B cell (primary cell): ENCODE measurements at regions of chr6 and their contacts with region 1.

Region 1: DNA sequence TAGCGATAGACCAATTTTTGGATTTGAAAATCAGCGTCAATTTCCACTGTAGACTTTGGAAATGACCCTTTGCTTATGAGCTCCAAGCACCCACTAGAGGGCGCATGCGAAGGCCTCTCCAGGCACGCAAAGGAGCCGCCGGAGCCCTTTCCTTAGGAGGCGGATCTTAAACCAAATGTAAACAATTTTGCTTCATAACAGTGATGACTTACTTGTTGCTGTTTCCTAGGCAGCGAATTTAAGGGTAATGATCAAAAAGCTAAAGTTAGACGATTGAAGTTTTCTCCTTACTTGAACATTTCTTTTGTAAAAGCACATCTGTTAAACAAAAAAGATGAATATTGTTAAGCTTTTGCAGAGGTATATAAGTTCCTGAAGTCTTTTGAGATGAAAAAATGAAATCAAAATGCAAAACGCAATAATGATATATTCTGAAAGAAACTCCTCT is 29.2 kb upstream of the EXOC2 start:
- DNase-seq: peak; percentile 72
- ATAC-seq: peak; percentile 43
- H3K4me3 ChIP-seq: no peak overlapping the region
- H3K4me3 Mint-ChIP-seq: no peak overlapping the region
- H3K27ac ChIP-seq: no peak overlapping the region
- H3K27ac Mint-ChIP-seq: no peak overlapping the region
- H3K4me1 ChIP-seq: peaks cover 0 to 5% of the 10 kb centered on the region in 2 donors
- H3K4me1 Mint-ChIP-seq: peaks cover 6% of the 10 kb centered on the region
- H3K27me3 ChIP-seq: peaks cover 0 to 5% (median 2%) of the 10 kb centered on the region in 4 experiments
- H3K27me3 Mint-ChIP-seq: peaks cover 43% of the 10 kb centered on the region
- CTCF ChIP-seq: peak; percentile 95

Region 2: DNA sequence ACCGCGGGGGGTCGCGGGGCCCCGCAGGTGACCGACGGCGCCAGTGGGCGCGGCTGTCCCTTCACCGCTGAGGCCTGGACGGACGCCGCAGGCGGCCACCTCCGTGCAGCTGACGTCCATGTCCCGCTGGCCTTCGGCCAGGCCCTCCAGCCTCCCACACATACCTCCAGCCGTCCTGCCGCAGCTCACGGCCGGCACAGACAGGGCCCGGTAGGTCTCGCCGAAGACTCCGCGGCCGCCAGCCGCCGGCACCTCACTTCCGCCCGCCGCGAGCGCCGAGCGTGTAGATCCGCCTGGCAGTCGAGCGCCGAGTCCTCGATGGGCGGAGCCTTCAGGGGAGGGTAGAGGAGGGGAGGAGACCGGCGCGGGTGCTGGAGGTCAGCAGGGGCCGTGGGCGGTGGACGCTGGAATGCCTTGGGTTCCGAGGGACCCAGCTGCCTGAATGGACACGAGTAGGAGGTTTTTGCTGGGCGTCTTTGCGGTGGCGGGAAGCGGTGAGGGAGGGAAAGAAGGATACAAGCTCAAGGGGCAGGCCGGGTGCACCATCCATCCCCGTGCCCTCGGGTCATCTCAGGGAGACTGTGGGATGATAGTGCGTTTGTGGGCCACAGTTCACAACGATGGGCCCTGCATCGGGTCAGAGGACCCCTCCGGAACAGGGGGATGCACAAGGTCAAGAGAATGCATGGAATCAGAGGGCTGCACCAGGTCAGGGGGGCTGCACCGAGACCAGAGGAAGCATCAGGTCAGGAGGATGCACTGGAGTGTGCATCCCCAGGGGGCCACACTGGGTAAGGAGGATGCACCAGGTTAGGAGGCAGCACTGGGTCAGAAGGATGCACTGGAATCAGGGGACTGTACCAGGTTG is 29.0 kb before region 1 on chr6 and contains the start of gene EXOC2:
- CTCF ChIA-PET with region 1: interaction called, 12 read pairs
- POLR2A ChIA-PET with region 1: no interaction called
- intact Hi-C with region 1: no loop called
- DNase-seq: peak; percentile 87
- ATAC-seq: peak; percentile 86
- H3K4me3 ChIP-seq: peak within 1 kb of the TSS; percentile 45 to 91 (median 86)
- H3K4me3 Mint-ChIP-seq: peak within 1 kb of the TSS; percentile 99
- H3K27ac ChIP-seq: peak within 1 kb of the TSS; percentile 62 to 93
- H3K27ac Mint-ChIP-seq: peak within 1 kb of the TSS; percentile 95
- H3K4me1 ChIP-seq: peaks cover 16 to 17% of the 10 kb centered on the region in 2 donors
- H3K4me1 Mint-ChIP-seq: peaks cover 35% of the 10 kb centered on the region
- H3K27me3 ChIP-seq: no peaks in the 10 kb centered on the region
- H3K27me3 Mint-ChIP-seq: no peaks in the 10 kb centered on the region
- CTCF ChIP-seq: no peak
- total RNA-seq, gene EXOC2: 41.0 and 45.0 TPM in 2 replicates

Region 3: DNA sequence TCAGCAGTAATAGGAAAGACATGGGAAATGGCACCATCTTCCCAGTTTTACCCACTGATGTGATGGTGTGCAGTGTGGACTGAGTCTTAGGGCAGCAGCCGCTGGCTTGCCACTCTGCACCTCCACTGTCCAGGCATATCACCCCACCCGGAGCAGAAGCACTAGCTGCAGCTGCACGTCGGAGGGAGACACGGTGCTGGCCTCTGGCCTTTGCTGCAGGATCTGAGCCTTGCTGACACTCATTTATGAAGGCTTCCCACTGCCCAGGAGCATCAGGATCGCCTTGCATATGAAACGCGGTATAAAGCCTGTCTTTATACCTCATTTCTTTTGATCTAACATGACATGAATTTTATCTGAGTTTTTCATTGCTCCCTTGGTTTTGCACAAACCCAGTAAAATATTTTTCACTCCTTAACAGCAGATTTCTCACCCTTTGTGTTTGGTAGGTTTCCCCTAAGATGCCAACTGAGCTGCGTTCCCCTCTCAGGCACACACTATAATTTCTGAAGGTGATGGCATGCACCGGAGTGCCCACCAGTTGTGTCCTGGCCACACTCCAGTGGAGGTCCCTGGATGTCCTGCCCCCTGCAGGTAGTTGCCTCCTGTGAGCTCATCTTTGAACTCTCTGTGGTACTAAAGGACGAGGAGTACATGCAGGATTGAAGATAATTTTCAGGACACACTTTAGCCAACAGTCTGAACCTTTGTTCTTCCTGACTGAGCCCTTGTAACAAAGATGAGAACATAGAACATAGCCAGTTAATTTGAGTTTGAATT is 20.2 kb before region 1 on chr6:
- CTCF ChIA-PET with region 1: interaction called, 14 read pairs
- POLR2A ChIA-PET with region 1: no interaction called
- intact Hi-C with region 1: no loop called
- DNase-seq: no peak
- ATAC-seq: no peak
- H3K4me3 ChIP-seq: no peak overlapping the region
- H3K4me3 Mint-ChIP-seq: no peak overlapping the region
- H3K27ac ChIP-seq: no peak overlapping the region
- H3K27ac Mint-ChIP-seq: no peak overlapping the region
- H3K4me1 ChIP-seq: no peaks in the 10 kb centered on the region
- H3K4me1 Mint-ChIP-seq: no peaks in the 10 kb centered on the region
- H3K27me3 ChIP-seq: no peaks in the 10 kb centered on the region
- H3K27me3 Mint-ChIP-seq: peaks cover 8% of the 10 kb centered on the region
- CTCF ChIP-seq: no peak

Region 4: DNA sequence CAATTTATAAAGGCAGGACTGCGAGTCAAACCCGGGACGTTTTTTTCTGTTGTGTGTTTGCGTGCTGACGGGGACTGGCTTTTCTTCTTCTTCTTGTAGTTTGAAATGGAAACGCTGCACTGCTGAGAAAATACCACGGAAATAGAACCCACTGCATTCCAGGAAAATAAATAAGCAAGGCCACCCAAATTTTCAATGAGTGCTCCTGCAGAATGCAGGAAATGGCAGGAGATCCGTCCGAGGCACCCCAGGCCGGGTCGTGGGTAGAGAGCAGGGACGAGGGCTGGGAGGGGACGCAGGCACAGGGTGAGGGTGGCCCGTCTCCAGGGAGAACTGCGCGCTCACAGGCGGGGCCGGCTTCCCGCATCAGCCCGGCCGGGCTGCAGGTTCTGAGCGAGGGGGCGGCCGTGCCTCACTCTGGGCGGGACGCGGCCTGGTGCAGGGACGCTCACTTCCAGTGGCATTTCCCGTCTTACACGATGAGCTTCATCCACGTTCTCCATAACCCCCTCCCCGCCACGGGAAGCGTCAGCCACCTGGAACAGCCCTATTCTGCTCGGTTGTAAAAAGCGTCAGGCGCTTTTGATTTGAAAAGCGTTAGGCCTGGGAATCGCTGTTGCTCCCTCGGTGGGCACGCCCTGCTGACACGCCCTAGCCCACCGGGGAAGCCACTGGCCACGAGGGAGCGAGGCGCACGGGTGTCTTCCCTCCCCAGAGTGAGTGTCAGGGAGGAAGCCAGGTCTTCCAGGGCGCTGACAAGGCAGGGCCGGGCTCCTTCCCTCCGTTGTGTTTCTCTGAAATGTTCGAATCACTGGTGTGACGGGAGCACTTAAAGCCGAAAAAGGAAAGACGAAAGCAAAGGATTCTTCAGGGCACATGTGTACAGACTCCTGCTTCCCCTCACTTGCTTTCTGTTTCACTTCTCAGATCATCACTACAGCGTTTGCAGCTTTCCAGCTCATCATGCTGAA is 11.2 kb before region 1 on chr6:
- CTCF ChIA-PET with region 1: interaction called, 18 read pairs
- POLR2A ChIA-PET with region 1: no interaction called
- intact Hi-C with region 1: loop called (anchors 1 kb)
- DNase-seq: peak; percentile 75
- ATAC-seq: peak; percentile 87
- H3K4me3 ChIP-seq: peak overlapping the region; percentile 46 to 95 (median 91)
- H3K4me3 Mint-ChIP-seq: peak overlapping the region; percentile 99
- H3K27ac ChIP-seq: peak overlapping the region; percentile 87
- H3K27ac Mint-ChIP-seq: peak overlapping the region; percentile 98
- H3K4me1 ChIP-seq: peaks cover 12 to 14% of the 10 kb centered on the region in 2 donors
- H3K4me1 Mint-ChIP-seq: peaks cover 15% of the 10 kb centered on the region
- H3K27me3 ChIP-seq: no peaks in the 10 kb centered on the region
- H3K27me3 Mint-ChIP-seq: peaks cover 5% of the 10 kb centered on the region
- CTCF ChIP-seq: no peak

Region 5: DNA sequence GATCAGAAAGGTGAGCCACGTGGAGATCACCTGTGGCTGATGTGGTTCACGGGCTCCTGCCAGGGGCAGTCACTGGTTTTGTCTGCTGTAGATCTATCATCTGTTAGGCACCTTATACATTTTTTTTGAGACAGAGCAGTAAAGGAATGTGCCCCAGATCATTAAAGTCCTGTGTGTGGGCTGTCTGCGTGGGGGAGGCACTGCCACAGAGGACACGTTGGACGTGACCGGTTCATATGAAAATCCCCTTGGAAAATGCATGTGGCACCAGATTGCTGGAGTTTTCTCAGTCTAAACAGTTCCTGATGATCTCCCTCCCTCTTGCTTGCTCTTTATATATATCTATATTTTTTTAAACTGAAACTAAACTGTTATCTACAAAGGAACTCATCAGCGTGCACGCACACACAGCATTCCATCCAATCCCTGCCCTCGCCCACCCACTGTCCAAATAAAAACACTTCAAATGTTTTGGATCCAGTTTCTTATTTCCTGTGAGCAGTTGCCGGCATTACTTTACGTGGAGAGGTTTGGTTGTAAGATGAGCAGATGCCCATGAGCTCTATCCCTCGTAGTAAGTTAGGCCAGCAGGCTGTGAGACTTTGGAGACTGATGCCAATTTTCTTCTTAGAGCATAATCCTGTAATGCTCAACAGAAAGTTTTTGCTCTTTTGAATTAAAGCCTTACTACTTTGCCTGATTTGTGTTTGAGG is 132.5 kb after region 1 on chr6:
- CTCF ChIA-PET with region 1: no interaction called
- POLR2A ChIA-PET with region 1: no interaction called
- intact Hi-C with region 1: no loop called
- DNase-seq: no peak
- ATAC-seq: no peak
- H3K4me3 ChIP-seq: no peak overlapping the region
- H3K4me3 Mint-ChIP-seq: no peak overlapping the region
- H3K27ac ChIP-seq: no peak overlapping the region
- H3K27ac Mint-ChIP-seq: no peak overlapping the region
- H3K4me1 ChIP-seq: no peaks in the 10 kb centered on the region
- H3K4me1 Mint-ChIP-seq: peaks cover 4% of the 10 kb centered on the region
- H3K27me3 ChIP-seq: no peaks in the 10 kb centered on the region
- H3K27me3 Mint-ChIP-seq: peaks cover 11% of the 10 kb centered on the region
- CTCF ChIP-seq: no peak

Region 6: GRCh38 chr6:1436334-1437306 is 714.5 kb after region 1 on chr6:
- CTCF ChIA-PET with region 1: interaction called, 3 read pairs
- POLR2A ChIA-PET with region 1: no interaction called
- intact Hi-C with region 1: loop called (anchors 2 kb)
- DNase-seq: peak; percentile 70
- ATAC-seq: no peak
- H3K4me3 ChIP-seq: no peak overlapping the region
- H3K4me3 Mint-ChIP-seq: no peak overlapping the region
- H3K27ac ChIP-seq: no peak overlapping the region
- H3K27ac Mint-ChIP-seq: no peak overlapping the region
- H3K4me1 ChIP-seq: no peaks in the 10 kb centered on the region
- H3K4me1 Mint-ChIP-seq: no peaks in the 10 kb centered on the region
- H3K27me3 ChIP-seq: peaks cover 0 to 20% (median 10%) of the 10 kb centered on the region in 4 experiments
- H3K27me3 Mint-ChIP-seq: peaks cover 43% of the 10 kb centered on the region
- CTCF ChIP-seq: peak; percentile 78